Activated CD4-positive, alpha-beta memory T cell treated with anti-CD3 and anti-CD28 coated beads for 36 hours (primary cell): ENCODE measurements at regions of chr1 and their contacts with region 1.

Region 1: GRCh38 chr1:20932437-20932977 is 145.4 kb upstream of the HP1BP3 start:
- DNase-seq: peak; percentile 64
- H3K4me3 Mint-ChIP-seq: peak overlapping the region; percentile 17
- H3K27ac Mint-ChIP-seq: peak overlapping the region; percentile 82
- H3K4me1 Mint-ChIP-seq: peaks cover 37% of the 10 kb centered on the region
- H3K27me3 Mint-ChIP-seq: no peaks in the 10 kb centered on the region

Region 2: GRCh38 chr1:20786253-20787028 is 146.1 kb before region 1 on chr1:
- CTCF ChIA-PET with region 1: no interaction called
- POLR2A ChIA-PET with region 1: no interaction called
- intact Hi-C with region 1: loop called (anchors 2 kb)
- DNase-seq: peak; percentile 97
- H3K4me3 Mint-ChIP-seq: peak overlapping the region; percentile 92
- H3K27ac Mint-ChIP-seq: peak overlapping the region; percentile 93
- H3K4me1 Mint-ChIP-seq: peaks cover 27% of the 10 kb centered on the region
- H3K27me3 Mint-ChIP-seq: peaks cover 3% of the 10 kb centered on the region

Region 3: GRCh38 chr1:20974951-20975350 is 42.4 kb after region 1 on chr1:
- CTCF ChIA-PET with region 1: no interaction called
- POLR2A ChIA-PET with region 1: no interaction called
- intact Hi-C with region 1: loop called (anchors 1 kb)
- DNase-seq: no peak
- H3K4me3 Mint-ChIP-seq: no peak overlapping the region
- H3K27ac Mint-ChIP-seq: no peak overlapping the region
- H3K4me1 Mint-ChIP-seq: peaks cover 6% of the 10 kb centered on the region
- H3K27me3 Mint-ChIP-seq: no peaks in the 10 kb centered on the region

Region 4: GRCh38 chr1:20992322-20993056 is 60.0 kb after region 1 on chr1:
- CTCF ChIA-PET with region 1: no interaction called
- POLR2A ChIA-PET with region 1: interaction called, 3 read pairs
- intact Hi-C with region 1: loop called (anchors 1 kb)
- DNase-seq: no peak
- H3K4me3 Mint-ChIP-seq: peak overlapping the region; percentile 40
- H3K27ac Mint-ChIP-seq: peak overlapping the region; percentile 75
- H3K4me1 Mint-ChIP-seq: peaks cover 24% of the 10 kb centered on the region
- H3K27me3 Mint-ChIP-seq: no peaks in the 10 kb centered on the region

Region 5: GRCh38 chr1:21022279-21023040 is 90.0 kb after region 1 on chr1:
- CTCF ChIA-PET with region 1: interaction called, 4 read pairs
- POLR2A ChIA-PET with region 1: interaction called, 5 read pairs
- intact Hi-C with region 1: loop called (anchors 1 kb)
- DNase-seq: peak; percentile 29
- H3K4me3 Mint-ChIP-seq: peak overlapping the region; percentile 48
- H3K27ac Mint-ChIP-seq: peak overlapping the region; percentile 83
- H3K4me1 Mint-ChIP-seq: peaks cover 18% of the 10 kb centered on the region
- H3K27me3 Mint-ChIP-seq: no peaks in the 10 kb centered on the region

Region 6: GRCh38 chr1:21189906-21190500 is 257.5 kb after region 1 on chr1:
- CTCF ChIA-PET with region 1: no interaction called
- POLR2A ChIA-PET with region 1: no interaction called
- intact Hi-C with region 1: loop called (anchors 5 kb)
- DNase-seq: no peak
- H3K4me3 Mint-ChIP-seq: no peak overlapping the region
- H3K27ac Mint-ChIP-seq: no peak overlapping the region
- H3K4me1 Mint-ChIP-seq: no peaks in the 10 kb centered on the region
- H3K27me3 Mint-ChIP-seq: peaks cover 5% of the 10 kb centered on the region